ENCODE measurements at regions of chrX and their contacts with region 1.

Region 1: DNA sequence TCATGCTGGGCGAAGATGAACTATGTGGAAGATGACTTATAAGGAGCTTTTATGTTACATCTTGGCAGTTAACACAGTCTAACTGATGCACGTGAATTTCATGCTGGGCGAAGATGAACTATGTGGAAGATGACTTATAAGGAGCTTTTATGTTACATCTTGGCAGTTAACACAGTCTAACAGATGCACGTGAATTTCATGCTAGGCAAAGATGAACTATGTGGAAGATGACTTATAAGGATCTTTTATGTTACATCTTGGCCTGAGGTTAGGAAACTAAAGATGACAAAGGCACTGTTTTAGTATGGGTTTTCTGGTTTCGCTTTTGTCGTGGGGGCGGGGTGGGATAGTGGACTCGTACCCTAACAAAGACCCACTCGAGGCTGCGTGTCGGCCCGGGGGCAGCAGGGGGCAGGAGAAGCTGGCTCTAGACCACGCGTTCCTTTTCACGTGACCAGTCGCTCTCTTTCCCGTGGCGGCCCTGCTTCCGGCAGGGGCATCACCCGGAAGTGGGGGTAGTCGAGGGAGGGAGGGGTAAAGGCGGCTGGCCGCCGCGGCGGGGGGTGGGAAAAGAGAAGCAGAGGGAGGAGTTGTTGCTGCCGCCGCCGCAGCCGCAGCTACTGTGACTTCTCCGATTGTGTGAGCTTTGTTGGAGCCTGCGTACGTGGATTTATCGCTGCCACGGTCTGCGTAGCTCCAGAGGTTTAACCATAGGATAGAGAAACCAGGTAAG is at the start of gene ATP7A:
- DNase-seq: peak; percentile 62 to 94 (median 88)
- ATAC-seq: peak; percentile 97
- H3K4me3 ChIP-seq: peak within 1 kb of the TSS; percentile 98
- H3K4me3 Mint-ChIP-seq: peak within 1 kb of the TSS; percentile 91 to 100 (median 96)
- H3K27ac ChIP-seq: peak within 1 kb of the TSS; percentile 93
- H3K27ac Mint-ChIP-seq: peak within 1 kb of the TSS; percentile 94 to 99 (median 98)
- H3K4me1 ChIP-seq: peaks cover 3 to 10% of the 10 kb centered on the region in 2 donors
- H3K4me1 Mint-ChIP-seq: peaks cover 6 to 28% (median 16%) of the 10 kb centered on the region in 7 donors
- H3K27me3 ChIP-seq: no peaks in the 10 kb centered on the region
- H3K27me3 Mint-ChIP-seq: no peaks in the 10 kb centered on the region
- total RNA-seq, gene ATP7A: 10.9 to 17.4 (median 17.0) TPM

Region 2: GRCh38 chrX:76172325-76172893 is 1737.9 kb before region 1 on chrX:
- CTCF ChIA-PET with region 1: no interaction called
- POLR2A ChIA-PET with region 1: no interaction called
- intact Hi-C with region 1: loop called in 1 of 2 experiments (anchors 10 kb)
- DNase-seq: no peak
- ATAC-seq: peak; percentile 56
- H3K4me3 ChIP-seq: peak overlapping the region; percentile 74
- H3K4me3 Mint-ChIP-seq: peak overlapping the region; percentile 87 to 97 (median 92)
- H3K27ac ChIP-seq: peak overlapping the region; percentile 81
- H3K27ac Mint-ChIP-seq: peak overlapping the region; percentile 92 to 97 (median 95)
- H3K4me1 ChIP-seq: peaks cover 19 to 20% of the 10 kb centered on the region in 2 donors
- H3K4me1 Mint-ChIP-seq: peaks cover 25 to 52% (median 48%) of the 10 kb centered on the region in 7 donors
- H3K27me3 ChIP-seq: no peaks in the 10 kb centered on the region
- H3K27me3 Mint-ChIP-seq: no peaks in the 10 kb centered on the region

Region 3: DNA sequence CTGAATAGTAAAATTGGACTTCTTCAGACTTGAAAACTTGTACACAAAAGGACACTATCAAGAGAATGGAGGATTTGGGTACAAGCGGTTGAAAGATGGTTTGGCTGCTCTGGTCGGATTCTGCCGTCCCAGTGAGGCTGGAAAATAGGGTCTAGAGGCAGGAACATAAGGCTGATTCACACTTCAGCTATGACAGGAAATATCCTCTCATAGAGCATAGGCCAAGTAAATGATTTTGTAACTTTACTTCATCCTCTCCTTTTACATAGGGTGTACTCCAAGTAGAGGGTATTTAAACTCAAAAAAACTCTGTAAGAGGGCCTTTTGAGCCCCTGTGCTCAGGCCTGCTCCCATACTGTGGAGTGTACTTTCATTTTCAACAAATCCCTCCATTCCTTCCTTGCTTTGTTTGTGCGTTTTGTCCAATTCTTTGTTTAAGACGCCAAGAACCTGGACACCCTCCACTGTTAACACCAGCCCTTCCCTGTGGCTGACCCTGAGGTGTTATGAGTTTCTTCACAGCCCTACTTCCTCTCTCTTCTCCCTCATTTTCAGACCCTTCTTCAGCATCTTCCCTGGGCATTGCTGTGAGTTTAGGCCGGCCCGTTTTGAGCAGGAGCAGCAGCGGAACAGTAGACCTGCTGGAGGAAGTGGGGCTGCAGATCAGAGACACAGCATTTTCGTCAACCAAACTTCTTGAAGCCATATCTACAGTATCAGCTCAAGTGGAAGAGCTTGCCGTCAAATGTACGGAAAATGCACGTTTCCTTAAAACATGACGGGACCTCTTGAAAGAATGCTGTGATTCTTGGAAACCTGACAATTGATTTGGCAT is 52.0 kb after region 1 on chrX:
- CTCF ChIA-PET with region 1: no interaction called
- POLR2A ChIA-PET with region 1: no interaction called
- intact Hi-C with region 1: loop called (anchors 1 to 2 kb)
- DNase-seq: peak in 7 of 9 donors; percentile 7 to 39 (median 21)
- ATAC-seq: peak; percentile 68
- H3K4me3 ChIP-seq: peak overlapping the region; percentile 30
- H3K4me3 Mint-ChIP-seq: peak overlapping the region; percentile 1 to 89 (median 82)
- H3K27ac ChIP-seq: peak overlapping the region; percentile 55
- H3K27ac Mint-ChIP-seq: peak overlapping the region; percentile 84 to 95 (median 91)
- H3K4me1 ChIP-seq: no peaks in the 10 kb centered on the region
- H3K4me1 Mint-ChIP-seq: peaks cover 12 to 44% (median 32%) of the 10 kb centered on the region in 7 donors
- H3K27me3 ChIP-seq: no peaks in the 10 kb centered on the region
- H3K27me3 Mint-ChIP-seq: no peaks in the 10 kb centered on the region

Region 4: GRCh38 chrX:78092296-78092695 is 182.0 kb after region 1 on chrX:
- CTCF ChIA-PET with region 1: interaction called, 4 read pairs
- POLR2A ChIA-PET with region 1: no interaction called
- intact Hi-C with region 1: loop called in 1 of 2 experiments (anchors 1 kb)
- DNase-seq: peak in 1 of 9 donors; percentile 13
- ATAC-seq: peak; percentile 59
- H3K4me3 ChIP-seq: no peak overlapping the region
- H3K4me3 Mint-ChIP-seq: no peak overlapping the region
- H3K27ac ChIP-seq: no peak overlapping the region
- H3K27ac Mint-ChIP-seq: peak overlapping the region in 2 of 9 donors; percentile 4 to 13
- H3K4me1 ChIP-seq: no peaks in the 10 kb centered on the region
- H3K4me1 Mint-ChIP-seq: peaks cover 0 to 15% (median 0%) of the 10 kb centered on the region in 7 donors
- H3K27me3 ChIP-seq: no peaks in the 10 kb centered on the region
- H3K27me3 Mint-ChIP-seq: peaks cover 0 to 14% (median 0%) of the 10 kb centered on the region in 5 donors

Region 5: GRCh38 chrX:78321809-78322208 is 411.5 kb after region 1 on chrX:
- CTCF ChIA-PET with region 1: no interaction called
- POLR2A ChIA-PET with region 1: no interaction called
- intact Hi-C with region 1: loop called (anchors 5 kb)
- DNase-seq: peak in 7 of 9 donors; percentile 57 to 80 (median 72)
- ATAC-seq: peak; percentile 91
- H3K4me3 ChIP-seq: no peak overlapping the region
- H3K4me3 Mint-ChIP-seq: peak overlapping the region; percentile 66 to 95 (median 75)
- H3K27ac ChIP-seq: peak overlapping the region; percentile 55
- H3K27ac Mint-ChIP-seq: peak overlapping the region; percentile 80 to 99 (median 91)
- H3K4me1 ChIP-seq: peaks cover 16 to 23% of the 10 kb centered on the region in 2 donors
- H3K4me1 Mint-ChIP-seq: peaks cover 16 to 57% (median 45%) of the 10 kb centered on the region in 7 donors
- H3K27me3 ChIP-seq: no peaks in the 10 kb centered on the region
- H3K27me3 Mint-ChIP-seq: no peaks in the 10 kb centered on the region

Region 6: GRCh38 chrX:79270401-79270800 is 1360.1 kb after region 1 on chrX:
- CTCF ChIA-PET with region 1: no interaction called
- POLR2A ChIA-PET with region 1: no interaction called
- intact Hi-C with region 1: loop called in 1 of 2 experiments (anchors 2 kb)
- DNase-seq: peak; percentile 29 to 76 (median 68)
- ATAC-seq: peak; percentile 98
- H3K4me3 ChIP-seq: no peak overlapping the region
- H3K4me3 Mint-ChIP-seq: peak overlapping the region; percentile 17 to 77 (median 56)
- H3K27ac ChIP-seq: peak overlapping the region; percentile 61
- H3K27ac Mint-ChIP-seq: peak overlapping the region in 8 of 9 donors; percentile 84 to 94 (median 90)
- H3K4me1 ChIP-seq: peaks cover 24 to 34% of the 10 kb centered on the region in 2 donors
- H3K4me1 Mint-ChIP-seq: peaks cover 13 to 68% (median 45%) of the 10 kb centered on the region in 7 donors
- H3K27me3 ChIP-seq: no peaks in the 10 kb centered on the region
- H3K27me3 Mint-ChIP-seq: no peaks in the 10 kb centered on the region